ENCODE measurements at regions of chr1 and their contacts with region 1.

Region 1: DNA sequence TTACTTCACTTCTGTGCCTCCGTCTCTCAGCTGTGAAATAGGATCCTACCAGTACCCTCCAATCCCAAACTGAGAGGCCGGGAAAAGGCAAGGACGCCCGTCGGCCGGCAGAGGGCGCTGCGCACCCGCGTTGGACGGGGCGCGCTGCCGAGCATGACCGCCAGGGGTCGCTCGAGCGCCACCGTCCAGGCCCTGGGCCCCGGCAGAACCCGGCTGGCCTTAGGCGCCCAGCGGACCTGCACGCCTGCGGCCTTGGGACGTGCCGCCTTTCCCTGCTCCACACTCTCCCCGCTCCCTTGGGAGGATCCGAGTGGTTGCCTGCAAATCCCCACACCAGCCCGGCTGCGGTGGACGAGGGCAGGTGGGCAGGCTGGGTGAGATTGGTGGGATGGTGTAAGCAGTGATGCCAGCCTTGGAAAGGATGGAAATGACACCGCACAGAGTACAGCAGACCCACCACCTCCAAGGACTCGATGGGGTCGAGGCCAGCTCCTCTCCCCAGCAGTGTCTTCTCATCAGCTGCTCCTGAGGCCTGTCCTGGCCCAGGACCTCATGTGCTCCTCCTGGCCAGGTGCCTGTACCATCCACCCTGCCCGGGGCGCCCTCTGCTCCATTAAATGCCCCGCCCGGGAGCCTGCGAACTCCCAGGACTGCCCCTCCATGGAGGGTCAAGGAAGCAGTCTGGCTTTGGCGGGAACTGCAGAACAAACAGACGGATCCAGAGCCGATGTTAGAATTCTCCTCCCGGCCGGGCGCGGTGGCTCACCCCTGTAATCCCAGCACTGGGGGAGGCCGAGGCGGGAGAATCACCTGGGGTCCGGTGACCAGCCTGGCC is 47.4 kb upstream of the LBR start:
- DNase-seq: peak; percentile 67
- H3K4me3 Mint-ChIP-seq: no peak overlapping the region
- H3K27ac Mint-ChIP-seq: no peak overlapping the region
- H3K4me1 Mint-ChIP-seq: peaks cover 31% of the 10 kb centered on the region
- H3K27me3 Mint-ChIP-seq: peaks cover 4% of the 10 kb centered on the region

Region 2: GRCh38 chr1:225413708-225414375 is 61.4 kb before region 1 on chr1:
- intact Hi-C with region 1: no loop called
- DNase-seq: no peak
- H3K4me3 Mint-ChIP-seq: no peak overlapping the region
- H3K27ac Mint-ChIP-seq: no peak overlapping the region
- H3K4me1 Mint-ChIP-seq: peaks cover 12% of the 10 kb centered on the region
- H3K27me3 Mint-ChIP-seq: no peaks in the 10 kb centered on the region

Region 3: DNA sequence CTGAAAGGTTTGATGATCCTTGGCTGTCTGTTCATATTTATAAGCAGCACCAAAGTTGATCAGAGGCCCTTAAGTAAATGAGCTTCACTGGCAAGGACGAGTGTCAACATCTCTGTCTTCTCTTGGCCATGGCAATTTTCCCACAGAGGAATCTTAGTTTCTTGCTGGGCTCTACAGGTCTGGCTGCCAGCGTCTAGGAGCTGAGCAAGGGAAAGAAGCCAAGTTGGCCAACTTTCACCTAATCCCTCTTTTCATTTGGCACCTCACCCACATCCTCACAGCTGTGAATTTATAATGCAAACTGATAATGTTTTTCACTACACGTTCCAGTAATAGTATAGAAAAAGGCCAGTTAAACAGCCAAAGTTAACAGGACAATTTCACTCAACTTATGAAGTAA is 51.7 kb after region 1 on chr1:
- intact Hi-C with region 1: no loop called
- DNase-seq: no peak
- H3K4me3 Mint-ChIP-seq: no peak overlapping the region
- H3K27ac Mint-ChIP-seq: no peak overlapping the region
- H3K4me1 Mint-ChIP-seq: no peaks in the 10 kb centered on the region
- H3K27me3 Mint-ChIP-seq: peaks cover 23% of the 10 kb centered on the region

Region 4: GRCh38 chr1:225554216-225554812 is 79.1 kb after region 1 on chr1:
- intact Hi-C with region 1: loop called (anchors 5 kb)
- DNase-seq: no peak
- H3K4me3 Mint-ChIP-seq: no peak overlapping the region
- H3K27ac Mint-ChIP-seq: no peak overlapping the region
- H3K4me1 Mint-ChIP-seq: no peaks in the 10 kb centered on the region
- H3K27me3 Mint-ChIP-seq: peaks cover 7% of the 10 kb centered on the region

Region 5: GRCh38 chr1:225652729-225653462 is 177.7 kb after region 1 on chr1 and contains the start of gene ENAH:
- intact Hi-C with region 1: loop called (anchors 10 kb)
- DNase-seq: no peak
- H3K4me3 Mint-ChIP-seq: peak within 1 kb of the TSS; percentile 85
- H3K27ac Mint-ChIP-seq: no peak within 1 kb of the TSS
- H3K4me1 Mint-ChIP-seq: peaks cover 9% of the 10 kb centered on the region
- H3K27me3 Mint-ChIP-seq: peaks cover 62% of the 10 kb centered on the region
- total RNA-seq, gene ENAH: 0.11 and 0.14 TPM in 2 replicates

Region 6: DNA sequence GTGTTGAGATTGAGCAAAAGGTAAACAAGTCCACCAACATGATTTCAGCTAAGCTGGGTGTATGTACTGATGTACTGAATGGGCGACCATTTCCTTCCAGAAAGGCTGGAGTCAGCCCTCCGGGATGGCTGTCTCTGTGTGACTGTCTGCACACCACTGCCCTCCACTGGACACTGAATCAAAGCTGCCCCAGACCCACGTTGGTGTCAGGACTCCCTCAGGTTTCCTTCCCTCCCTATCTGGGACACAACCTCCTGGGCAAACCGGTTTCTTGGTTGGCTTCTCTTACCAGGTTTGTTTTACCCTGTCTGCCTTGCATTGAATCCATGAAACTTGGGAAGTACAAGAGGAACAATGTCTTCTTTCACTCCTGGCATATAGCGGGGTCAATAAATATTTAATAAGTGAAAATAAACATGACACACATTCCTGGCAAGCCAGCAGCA is 297.1 kb after region 1 on chr1:
- intact Hi-C with region 1: loop called (anchors 2 kb)
- DNase-seq: no peak
- H3K4me3 Mint-ChIP-seq: no peak overlapping the region
- H3K27ac Mint-ChIP-seq: no peak overlapping the region
- H3K4me1 Mint-ChIP-seq: peaks cover 3% of the 10 kb centered on the region
- H3K27me3 Mint-ChIP-seq: peaks cover 2% of the 10 kb centered on the region

Region 7: DNA sequence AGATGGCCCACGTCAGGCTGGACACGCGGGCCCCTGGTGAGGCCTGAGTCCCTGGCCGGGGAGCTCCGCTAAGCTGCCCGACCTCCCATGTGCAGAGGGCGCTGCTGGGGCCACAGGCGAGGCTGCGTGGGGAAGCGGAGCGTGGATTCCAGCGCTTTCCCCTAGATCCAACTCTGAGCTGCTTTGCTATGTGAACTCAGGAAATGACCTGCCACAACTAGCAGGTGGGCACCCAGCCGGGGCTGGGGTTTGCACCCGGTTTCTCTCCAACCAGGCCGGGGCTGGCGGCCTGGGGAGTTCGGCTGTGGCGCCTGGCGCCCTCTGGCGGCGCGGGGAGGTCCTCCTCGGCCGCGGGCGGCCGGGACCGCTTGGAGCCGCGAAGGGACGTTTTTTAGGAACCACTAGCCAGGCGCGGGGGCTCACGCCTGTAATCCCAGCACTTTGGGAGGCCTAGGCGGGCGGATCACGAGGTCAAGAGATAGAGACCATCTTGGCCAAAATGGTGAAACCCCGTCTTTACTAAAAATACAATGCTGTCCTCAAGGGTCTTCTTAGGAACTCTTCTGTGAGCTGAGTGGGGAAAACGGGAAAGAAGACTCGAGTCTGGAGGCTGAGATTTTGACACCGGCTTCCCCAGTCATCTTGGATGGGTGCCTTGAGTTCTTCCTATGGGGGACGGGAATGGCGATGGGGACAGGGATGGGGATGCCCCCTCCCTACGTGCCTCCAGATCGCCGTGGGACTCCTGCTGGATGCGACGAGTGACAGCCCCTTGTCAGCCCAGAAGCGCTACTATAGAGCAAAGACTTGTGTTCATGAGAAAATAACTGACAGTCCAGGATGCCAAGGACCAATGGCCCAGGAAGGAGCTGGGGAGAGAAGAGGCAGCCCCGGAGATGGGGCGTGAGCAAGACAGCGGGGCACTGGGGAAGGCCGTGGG is 436.3 kb after region 1 on chr1:
- intact Hi-C with region 1: loop called (anchors 1 kb)
- DNase-seq: peak; percentile 62
- H3K4me3 Mint-ChIP-seq: no peak overlapping the region
- H3K27ac Mint-ChIP-seq: no peak overlapping the region
- H3K4me1 Mint-ChIP-seq: peaks cover 5% of the 10 kb centered on the region
- H3K27me3 Mint-ChIP-seq: peaks cover 6% of the 10 kb centered on the region

Region 8: DNA sequence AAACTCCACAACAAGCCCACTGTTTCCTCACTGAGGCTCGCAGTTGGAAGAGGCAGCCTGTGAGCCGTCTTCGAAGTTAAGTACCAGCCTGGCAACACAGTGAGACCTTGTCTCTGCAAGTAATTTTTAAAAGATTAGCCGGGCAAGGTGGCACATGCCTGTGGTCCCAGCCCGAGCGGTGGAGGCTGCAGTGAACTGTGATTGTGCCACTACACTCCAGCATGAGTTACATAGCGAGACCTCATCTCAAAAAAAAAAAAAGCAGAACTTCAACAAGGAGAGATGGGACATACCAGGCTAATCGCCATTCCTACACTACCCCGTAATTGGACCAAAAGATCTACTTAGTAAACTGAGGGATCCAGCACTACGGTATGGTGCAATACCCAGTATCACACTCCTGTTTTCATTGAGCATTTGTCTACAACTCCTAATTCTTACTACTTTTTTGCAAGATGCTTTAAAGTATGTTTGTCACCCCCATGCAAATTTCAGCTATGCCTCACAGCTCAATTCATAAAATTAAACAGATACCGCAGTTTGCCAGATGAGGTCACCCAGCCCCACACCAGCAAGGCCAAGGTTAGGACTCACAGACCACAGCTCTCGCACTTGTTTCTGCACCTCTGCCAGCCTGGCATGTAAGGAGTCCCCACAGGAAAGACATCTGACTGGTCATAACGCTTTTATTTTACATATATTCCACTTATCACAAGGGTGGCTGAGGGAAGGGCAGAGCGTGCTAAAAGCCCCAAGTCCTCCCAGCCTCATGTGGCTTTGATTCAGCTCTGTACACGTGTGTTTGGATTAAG is 502.9 kb after region 1 on chr1:
- intact Hi-C with region 1: loop called (anchors 1 kb)
- DNase-seq: no peak
- H3K4me3 Mint-ChIP-seq: no peak overlapping the region
- H3K27ac Mint-ChIP-seq: no peak overlapping the region
- H3K4me1 Mint-ChIP-seq: peaks cover 4% of the 10 kb centered on the region
- H3K27me3 Mint-ChIP-seq: no peaks in the 10 kb centered on the region